ENCODE measurements at regions of chr16 and their contacts with region 1.

Region 1: DNA sequence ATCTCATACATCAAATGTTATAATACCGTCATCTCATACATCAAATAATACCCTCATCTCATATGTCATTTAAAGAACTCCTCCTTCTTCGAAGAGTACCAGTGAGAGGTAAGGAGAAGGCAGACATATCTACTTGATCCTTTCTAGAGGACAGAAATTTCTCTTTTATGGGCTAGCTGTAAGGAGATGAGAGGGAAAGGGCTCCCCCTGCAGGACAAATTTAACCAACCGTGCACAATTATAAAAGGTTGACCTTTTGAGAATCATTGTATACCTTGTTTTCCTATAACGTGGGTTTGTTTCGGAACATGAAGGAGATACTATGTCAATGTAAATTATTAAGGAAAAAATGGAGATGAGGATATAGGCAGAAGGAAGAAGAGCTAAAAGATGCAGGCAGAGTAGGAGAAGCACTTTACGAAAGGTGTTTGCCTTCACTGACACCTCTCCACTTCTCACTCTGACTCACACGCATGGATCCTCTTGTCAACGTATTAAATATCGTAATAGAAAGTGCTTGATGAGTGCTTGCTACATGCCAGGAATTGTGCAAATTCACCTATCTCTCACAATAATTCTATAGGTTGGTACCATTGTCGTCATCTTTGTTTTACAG is 465.9 kb upstream of the ERCC4 start:
- DNase-seq: peak; percentile 58
- H3K4me3 Mint-ChIP-seq: no peak overlapping the region
- H3K27ac Mint-ChIP-seq: peak overlapping the region; percentile 75
- H3K4me1 Mint-ChIP-seq: peaks cover 23% of the 10 kb centered on the region
- H3K27me3 Mint-ChIP-seq: no peaks in the 10 kb centered on the region
- CTCF ChIP-seq: peak; percentile 62

Region 2: DNA sequence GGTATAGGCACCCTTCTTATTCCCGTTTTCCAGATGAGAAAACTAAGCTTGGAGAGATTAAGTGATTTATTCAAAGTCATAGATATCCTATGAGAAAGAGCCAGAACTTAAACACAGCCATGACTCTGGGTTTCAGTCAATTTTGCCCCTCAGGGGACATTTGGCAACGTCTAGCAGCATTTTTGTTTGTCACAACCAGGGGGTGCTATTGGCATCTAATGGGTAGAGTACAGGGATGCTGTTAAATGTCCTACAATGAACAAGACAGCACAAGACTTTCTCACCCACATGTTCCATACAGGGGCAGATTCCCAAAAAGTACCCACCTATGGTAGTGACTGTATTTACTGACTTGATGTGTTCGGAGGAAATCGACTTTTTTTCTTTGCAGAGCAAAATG is 557.5 kb before region 1 on chr16:
- CTCF ChIA-PET with region 1: interaction called, 45 read pairs
- POLR2A ChIA-PET with region 1: interaction called, 3 read pairs
- intact Hi-C with region 1: loop called (anchors 1 kb)
- DNase-seq: peak; percentile 77
- H3K4me3 Mint-ChIP-seq: no peak overlapping the region
- H3K27ac Mint-ChIP-seq: no peak overlapping the region
- H3K4me1 Mint-ChIP-seq: no peaks in the 10 kb centered on the region
- H3K27me3 Mint-ChIP-seq: peaks cover 11% of the 10 kb centered on the region
- CTCF ChIP-seq: peak; percentile 63

Region 3: GRCh38 chr16:12965274-12965804 is 488.7 kb before region 1 on chr16:
- CTCF ChIA-PET with region 1: interaction called, 14 read pairs
- POLR2A ChIA-PET with region 1: no interaction called
- intact Hi-C with region 1: loop called (anchors 5 kb)
- DNase-seq: peak; percentile 18
- H3K4me3 Mint-ChIP-seq: no peak overlapping the region
- H3K27ac Mint-ChIP-seq: no peak overlapping the region
- H3K4me1 Mint-ChIP-seq: peaks cover 6% of the 10 kb centered on the region
- H3K27me3 Mint-ChIP-seq: no peaks in the 10 kb centered on the region
- CTCF ChIP-seq: no peak

Region 4: GRCh38 chr16:13110124-13110796 is 343.8 kb before region 1 on chr16:
- CTCF ChIA-PET with region 1: no interaction called
- POLR2A ChIA-PET with region 1: no interaction called
- intact Hi-C with region 1: loop called (anchors 10 kb)
- DNase-seq: peak; percentile 93
- H3K4me3 Mint-ChIP-seq: peak overlapping the region; percentile 12
- H3K27ac Mint-ChIP-seq: peak overlapping the region; percentile 73
- H3K4me1 Mint-ChIP-seq: peaks cover 41% of the 10 kb centered on the region
- H3K27me3 Mint-ChIP-seq: no peaks in the 10 kb centered on the region
- CTCF ChIP-seq: no peak

Region 5: GRCh38 chr16:13231365-13231764 is 222.7 kb before region 1 on chr16:
- CTCF ChIA-PET with region 1: no interaction called
- POLR2A ChIA-PET with region 1: no interaction called
- intact Hi-C with region 1: no loop called
- DNase-seq: no peak
- H3K4me3 Mint-ChIP-seq: no peak overlapping the region
- H3K27ac Mint-ChIP-seq: no peak overlapping the region
- H3K4me1 Mint-ChIP-seq: no peaks in the 10 kb centered on the region
- H3K27me3 Mint-ChIP-seq: no peaks in the 10 kb centered on the region
- CTCF ChIP-seq: no peak

Region 6: DNA sequence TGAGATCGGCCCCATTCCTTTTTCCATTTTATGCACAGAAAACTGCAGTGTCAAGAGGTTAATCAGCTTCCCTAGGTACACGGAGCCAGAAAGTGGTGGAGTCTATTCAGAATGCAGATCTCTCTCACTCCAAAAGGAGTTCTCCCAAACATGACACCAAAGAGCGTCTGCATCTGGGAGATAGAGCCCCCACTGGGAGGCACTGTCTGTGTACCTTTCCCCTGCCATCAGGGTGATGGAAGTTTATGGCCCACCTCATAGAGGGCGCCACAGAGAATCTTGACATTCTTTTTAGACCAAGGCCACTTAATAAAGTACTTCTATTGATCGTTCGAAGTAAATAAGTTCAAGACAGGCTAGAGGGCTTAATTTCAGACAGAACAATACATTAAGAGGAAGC is 27.8 kb before region 1 on chr16:
- CTCF ChIA-PET with region 1: interaction called, 12 read pairs
- POLR2A ChIA-PET with region 1: interaction called, 3 read pairs
- intact Hi-C with region 1: no loop called
- DNase-seq: no peak
- H3K4me3 Mint-ChIP-seq: no peak overlapping the region
- H3K27ac Mint-ChIP-seq: no peak overlapping the region
- H3K4me1 Mint-ChIP-seq: peaks cover 7% of the 10 kb centered on the region
- H3K27me3 Mint-ChIP-seq: no peaks in the 10 kb centered on the region
- CTCF ChIP-seq: no peak

Measured in MCF 10A (cell line).